ENCODE measurements at regions of chr19 and their contacts with region 1.

Region 1: GRCh38 chr19:41144403-41144802 is 30.2 kb downstream of the CYP2F1 start:
- DNase-seq: peak; percentile 84
- ATAC-seq: peak; percentile 92

Region 2: DNA sequence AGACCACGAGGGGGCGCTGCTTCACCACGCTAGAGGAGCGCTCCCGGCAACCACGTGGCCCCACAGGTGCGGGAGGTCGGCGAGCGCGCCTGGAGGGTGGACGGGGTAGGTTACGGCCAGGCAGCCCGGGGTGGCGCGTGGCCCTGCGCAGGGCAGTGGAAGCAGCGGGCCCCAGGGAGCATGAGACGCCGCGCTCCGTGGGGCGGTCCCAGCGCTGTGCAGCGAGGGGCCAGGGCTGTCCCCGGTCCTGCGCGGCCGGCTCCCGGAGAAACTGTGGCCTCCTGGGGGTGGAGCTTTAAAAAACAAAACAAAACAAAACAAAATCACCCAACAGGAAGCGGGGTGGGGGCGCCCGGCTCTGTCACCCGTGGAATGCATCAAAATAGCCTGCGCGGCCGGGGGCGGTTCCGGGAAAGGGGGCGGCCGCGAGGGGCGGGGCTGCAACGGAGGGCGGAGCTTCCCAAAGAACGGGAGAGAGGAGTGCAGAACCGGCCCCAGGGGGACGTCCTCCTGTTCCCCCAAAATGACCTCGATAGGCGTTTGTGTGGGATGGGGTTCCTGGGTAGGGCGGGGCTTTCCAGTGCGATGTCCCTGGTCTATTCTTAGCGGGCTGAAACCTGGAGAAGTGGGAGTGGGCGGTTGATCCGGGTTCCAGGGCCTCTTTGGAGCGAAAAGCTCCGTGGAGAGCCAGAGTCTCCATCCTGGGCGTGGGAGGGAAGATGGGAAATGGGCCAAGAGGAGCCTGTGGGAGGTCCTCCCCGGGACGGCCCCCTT is 481.3 kb before region 1 on chr19:
- intact Hi-C with region 1: loop called (anchors 5 kb)
- DNase-seq: peak; percentile 95
- ATAC-seq: peak; percentile 90

Region 3: GRCh38 chr19:40974633-40975037 is 169.8 kb before region 1 on chr19:
- intact Hi-C with region 1: loop called (anchors 5 kb)
- DNase-seq: peak; percentile 70
- ATAC-seq: peak; percentile 62

Measured in Right ventricle myocardium superior (tissue), 1 donor.